Motor neuron (in vitro differentiated cells): ENCODE measurements at regions of chr15 and their contacts with region 1.

Region 1: DNA sequence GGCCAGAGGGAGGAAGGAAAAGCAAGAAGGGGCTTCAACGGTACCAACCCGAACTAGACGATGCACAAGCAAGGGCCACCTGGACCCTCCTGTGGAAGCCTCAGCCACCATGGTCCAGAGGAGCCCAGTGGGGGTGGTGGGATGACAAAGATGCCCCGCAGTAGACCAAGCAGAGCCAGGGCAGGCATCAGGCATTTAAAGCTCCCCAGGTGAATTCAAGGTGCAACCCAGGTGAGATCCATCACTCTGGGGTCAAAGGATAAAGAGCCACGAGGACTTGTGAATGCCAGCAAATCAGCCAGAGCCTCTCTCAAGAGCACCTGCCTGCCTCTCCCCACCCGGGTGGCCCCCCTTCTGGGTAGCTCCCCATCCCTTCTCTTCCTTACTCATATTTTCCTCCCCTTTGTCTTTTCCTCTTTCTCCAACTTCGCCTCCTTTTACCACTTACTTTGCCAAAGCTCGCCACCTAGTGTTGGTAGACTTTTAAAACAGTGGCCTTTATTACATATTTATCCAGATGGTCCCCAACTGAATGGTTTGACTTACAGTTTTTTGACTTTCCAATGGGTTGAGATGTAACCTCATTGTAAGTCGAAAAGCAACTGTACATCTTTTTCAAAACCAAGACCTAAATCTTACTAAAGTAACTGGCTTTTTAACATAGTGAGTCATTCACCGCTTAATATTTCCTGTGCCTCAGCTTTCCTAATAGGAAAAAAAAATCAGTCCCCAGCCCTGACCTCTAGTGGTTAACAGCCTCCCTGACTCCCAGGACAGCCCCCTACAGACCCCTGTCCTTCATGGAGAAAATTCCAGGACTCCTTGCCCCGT is 18.8 kb downstream of the PLA2G4F start:
- ATAC-seq: peak in 5 of 8 experiments; percentile 7 to 48 (median 29)
- H3K4me3 ChIP-seq: no peak overlapping the region
- H3K27ac ChIP-seq: no peak overlapping the region
- H3K4me1 ChIP-seq: no peaks in the 10 kb centered on the region

Region 2: DNA sequence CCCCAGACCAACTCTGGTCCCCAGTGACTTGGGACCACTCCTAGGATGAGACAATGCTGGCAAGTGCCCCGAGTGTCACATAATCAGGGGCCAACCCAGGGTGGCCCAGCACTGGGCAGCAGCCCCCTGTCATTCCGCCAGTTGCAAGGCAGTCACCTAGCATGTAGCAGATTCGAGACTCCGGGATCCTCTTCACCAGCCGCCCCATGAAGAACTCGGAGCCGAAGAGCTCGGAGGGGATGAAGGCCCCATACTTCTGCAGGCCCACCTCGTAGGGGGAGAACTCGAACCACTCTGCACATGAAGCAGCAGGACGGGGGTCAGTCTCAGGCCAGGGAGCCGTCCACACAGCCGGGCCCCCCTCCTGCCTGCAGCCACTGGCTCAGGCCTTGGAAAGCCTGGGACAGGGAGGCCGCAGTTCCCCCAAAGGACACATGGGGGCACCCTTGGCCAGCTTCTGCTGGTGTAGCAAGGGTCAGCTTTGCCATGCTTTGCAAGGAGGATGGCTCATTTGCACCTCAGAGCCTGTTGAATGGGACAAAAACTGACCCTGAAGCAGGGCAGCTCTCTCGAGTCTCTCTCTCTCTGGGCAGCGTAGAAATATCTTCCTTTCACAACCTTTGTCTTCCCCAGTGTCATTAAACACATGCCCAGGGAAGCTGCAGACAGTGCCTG is 148.2 kb before region 1 on chr15:
- in situ Hi-C with region 1: loop called in 3 of 9 experiments (anchors 10 to 25 kb)
- ATAC-seq: peak; percentile 96 to 99 (median 97)
- H3K4me3 ChIP-seq: no peak overlapping the region
- H3K27ac ChIP-seq: no peak overlapping the region
- H3K4me1 ChIP-seq: no peaks in the 10 kb centered on the region

Region 3: DNA sequence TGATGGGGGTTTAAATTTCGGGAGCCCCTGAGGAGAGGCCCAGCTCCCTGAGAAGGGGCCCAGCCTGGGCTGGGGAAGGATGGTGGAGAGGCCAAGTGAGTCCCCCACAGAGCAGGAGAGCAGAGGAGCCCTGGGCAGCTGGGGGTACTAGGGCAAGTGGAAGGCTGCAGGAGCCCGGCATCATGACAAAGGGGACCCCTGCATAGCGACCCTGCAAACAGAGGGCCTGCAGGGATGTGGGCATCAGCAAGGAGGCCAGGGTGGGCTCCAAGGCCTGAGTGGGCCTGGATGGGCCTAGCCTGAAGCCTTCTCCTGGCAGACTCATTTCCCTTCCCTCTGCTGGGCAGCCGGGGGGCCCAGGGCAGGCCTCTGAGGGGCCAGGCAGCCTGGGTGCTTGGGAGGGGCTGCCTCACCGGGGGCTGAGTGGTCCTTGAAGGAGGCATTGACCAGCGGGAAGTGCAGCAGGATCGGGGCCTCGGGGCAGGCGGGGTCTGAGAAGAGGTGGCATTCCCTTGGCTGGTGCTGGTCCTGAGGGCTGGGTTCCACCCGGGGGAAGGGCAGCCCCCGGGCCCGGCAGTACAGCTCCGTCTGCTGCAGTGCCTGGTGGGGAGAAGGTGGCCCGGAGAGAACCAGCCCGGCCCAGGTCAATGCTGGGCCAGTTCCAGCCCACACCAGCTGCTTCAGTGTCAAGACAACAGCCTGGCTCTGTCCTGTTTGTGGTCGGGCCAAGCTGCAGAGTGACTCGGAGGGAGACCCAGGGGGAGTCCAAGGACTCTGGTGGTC is 68.0 kb before region 1 on chr15:
- in situ Hi-C with region 1: loop called in 1 of 9 experiments (anchors 5 kb)
- ATAC-seq: no peak
- H3K4me3 ChIP-seq: no peak overlapping the region
- H3K27ac ChIP-seq: no peak overlapping the region
- H3K4me1 ChIP-seq: peaks cover 2 to 3% of the 10 kb centered on the region in 2 donors

Region 4: DNA sequence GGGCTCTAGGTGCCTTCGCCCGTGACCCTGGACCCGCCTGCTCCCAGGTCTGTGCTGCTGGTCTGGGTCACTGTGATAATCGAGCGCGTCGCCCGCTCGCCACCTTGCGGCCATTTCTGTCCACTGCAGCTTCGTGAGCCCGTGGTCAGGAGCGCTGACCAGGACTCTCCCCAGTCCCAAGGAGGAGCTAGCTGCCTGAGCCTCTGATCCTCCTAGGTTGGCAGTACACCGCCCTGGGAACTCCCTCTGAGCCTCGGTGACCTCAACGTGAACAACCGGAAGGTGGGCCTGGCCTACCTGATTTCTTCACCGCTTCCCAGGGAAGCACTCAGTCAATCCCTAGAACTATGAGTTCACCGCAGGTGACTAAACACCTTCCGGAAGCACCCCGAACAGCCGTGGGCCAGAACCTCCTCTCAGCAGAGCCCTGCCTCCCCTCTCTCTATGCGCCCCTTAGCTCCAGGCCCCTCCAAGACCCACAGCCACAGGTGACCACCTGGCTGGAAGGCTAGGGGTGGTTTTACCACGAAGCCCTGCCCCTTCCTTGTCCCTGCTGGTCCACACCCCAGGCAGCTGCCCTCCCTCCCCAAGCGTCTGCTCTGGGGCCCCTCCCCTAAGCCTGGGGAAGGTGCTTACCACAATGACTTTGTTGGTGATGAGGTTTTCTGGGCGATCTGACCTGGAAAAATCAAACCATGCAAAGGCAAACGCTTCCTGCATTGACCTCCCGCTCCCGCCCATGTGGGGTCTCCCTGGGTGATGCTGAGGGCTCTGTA is 53.0 kb before region 1 on chr15:
- in situ Hi-C with region 1: loop called in 1 of 9 experiments (anchors 10 kb)
- ATAC-seq: peak; percentile 90 to 98 (median 94)
- H3K4me3 ChIP-seq: no peak overlapping the region
- H3K27ac ChIP-seq: no peak overlapping the region
- H3K4me1 ChIP-seq: no peaks in the 10 kb centered on the region

Region 5: GRCh38 chr15:42194502-42194901 is 56.9 kb after region 1 on chr15:
- in situ Hi-C with region 1: no loop called
- ATAC-seq: peak in 3 of 8 experiments; percentile 24 to 56 (median 41)
- H3K4me3 ChIP-seq: no peak overlapping the region
- H3K27ac ChIP-seq: no peak overlapping the region
- H3K4me1 ChIP-seq: no peaks in the 10 kb centered on the region